ENCODE measurements at regions of chr11 and their contacts with region 1.

Region 1: GRCh38 chr11:119155733-119156492 is 7.1 kb downstream of the ABCG4 start:
- DNase-seq: peak; percentile 46
- H3K4me3 Mint-ChIP-seq: no peak overlapping the region
- H3K27ac Mint-ChIP-seq: no peak overlapping the region
- H3K4me1 Mint-ChIP-seq: peaks cover 5% of the 10 kb centered on the region
- H3K27me3 Mint-ChIP-seq: peaks cover 10% of the 10 kb centered on the region
- CTCF ChIP-seq: no peak

Region 2: GRCh38 chr11:119077839-119078238 is 78.1 kb before region 1 on chr11:
- CTCF ChIA-PET with region 1: no interaction called
- POLR2A ChIA-PET with region 1: no interaction called
- intact Hi-C with region 1: no loop called
- DNase-seq: no peak
- H3K4me3 Mint-ChIP-seq: no peak overlapping the region
- H3K27ac Mint-ChIP-seq: no peak overlapping the region
- H3K4me1 Mint-ChIP-seq: no peaks in the 10 kb centered on the region
- H3K27me3 Mint-ChIP-seq: no peaks in the 10 kb centered on the region
- CTCF ChIP-seq: no peak

Region 3: GRCh38 chr11:119144825-119145486 is 11.0 kb before region 1 on chr11:
- CTCF ChIA-PET with region 1: interaction called, 25 read pairs
- POLR2A ChIA-PET with region 1: interaction called, 4 read pairs
- intact Hi-C with region 1: no loop called
- DNase-seq: peak; percentile 72
- H3K4me3 Mint-ChIP-seq: no peak overlapping the region
- H3K27ac Mint-ChIP-seq: no peak overlapping the region
- H3K4me1 Mint-ChIP-seq: no peaks in the 10 kb centered on the region
- H3K27me3 Mint-ChIP-seq: peaks cover 16% of the 10 kb centered on the region
- CTCF ChIP-seq: peak; percentile 65

Measured in MCF 10A (cell line).